ENCODE measurements at regions of chr3 and their contacts with region 1.

Region 1: GRCh38 chr3:13648060-13649001 is 99.4 kb downstream of the FBLN2 start:
- DNase-seq: peak; percentile 47
- ATAC-seq: peak; percentile 84
- H3K4me3 ChIP-seq: no peak overlapping the region
- H3K27ac ChIP-seq: no peak overlapping the region
- H3K4me1 ChIP-seq: no peaks in the 10 kb centered on the region; the same call in 1 of the 2 replicates
- H3K27me3 ChIP-seq: no peaks in the 10 kb centered on the region
- CTCF ChIP-seq: peak; percentile 95

Region 2: GRCh38 chr3:13073326-13074005 is 574.9 kb before region 1 on chr3 and contains the start of gene IQSEC1:
- CTCF ChIA-PET with region 1: no interaction called
- POLR2A ChIA-PET with region 1: no interaction called
- in situ Hi-C with region 1: no loop called
- intact Hi-C with region 1: no loop called
- DNase-seq: no peak
- ATAC-seq: no peak
- H3K4me3 ChIP-seq: no peak within 1 kb of the TSS
- H3K27ac ChIP-seq: no peak within 1 kb of the TSS
- H3K4me1 ChIP-seq: no peaks in the 10 kb centered on the region
- H3K27me3 ChIP-seq: no peaks in the 10 kb centered on the region
- CTCF ChIP-seq: no peak
- total RNA-seq, gene IQSEC1: 28.4 TPM

Region 3: DNA sequence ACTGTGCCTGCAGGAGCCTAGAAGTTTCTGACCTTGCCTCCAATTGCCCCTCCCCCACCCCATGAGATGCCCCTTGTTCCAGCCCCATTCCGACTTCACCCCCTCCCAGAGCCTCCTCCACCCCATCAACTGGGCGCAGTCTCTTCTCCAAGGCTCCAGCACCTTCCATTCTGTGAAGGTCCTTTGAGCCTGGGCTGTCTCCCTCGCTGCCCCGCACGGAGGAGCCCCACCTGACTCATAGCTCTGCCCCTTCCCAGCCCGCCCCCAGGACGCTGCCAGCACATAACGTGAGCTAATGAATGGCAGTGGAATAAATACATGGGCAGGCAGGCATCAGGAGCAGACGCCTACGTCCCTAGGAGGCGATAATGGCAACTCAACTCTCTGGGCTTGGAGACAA is 341.3 kb before region 1 on chr3:
- CTCF ChIA-PET with region 1: no interaction called
- POLR2A ChIA-PET with region 1: interaction called, 12 read pairs
- in situ Hi-C with region 1: no loop called
- intact Hi-C with region 1: no loop called
- DNase-seq: no peak
- ATAC-seq: no peak
- H3K4me3 ChIP-seq: no peak overlapping the region
- H3K27ac ChIP-seq: no peak overlapping the region
- H3K4me1 ChIP-seq: no peaks in the 10 kb centered on the region
- H3K27me3 ChIP-seq: no peaks in the 10 kb centered on the region
- CTCF ChIP-seq: no peak

Region 4: DNA sequence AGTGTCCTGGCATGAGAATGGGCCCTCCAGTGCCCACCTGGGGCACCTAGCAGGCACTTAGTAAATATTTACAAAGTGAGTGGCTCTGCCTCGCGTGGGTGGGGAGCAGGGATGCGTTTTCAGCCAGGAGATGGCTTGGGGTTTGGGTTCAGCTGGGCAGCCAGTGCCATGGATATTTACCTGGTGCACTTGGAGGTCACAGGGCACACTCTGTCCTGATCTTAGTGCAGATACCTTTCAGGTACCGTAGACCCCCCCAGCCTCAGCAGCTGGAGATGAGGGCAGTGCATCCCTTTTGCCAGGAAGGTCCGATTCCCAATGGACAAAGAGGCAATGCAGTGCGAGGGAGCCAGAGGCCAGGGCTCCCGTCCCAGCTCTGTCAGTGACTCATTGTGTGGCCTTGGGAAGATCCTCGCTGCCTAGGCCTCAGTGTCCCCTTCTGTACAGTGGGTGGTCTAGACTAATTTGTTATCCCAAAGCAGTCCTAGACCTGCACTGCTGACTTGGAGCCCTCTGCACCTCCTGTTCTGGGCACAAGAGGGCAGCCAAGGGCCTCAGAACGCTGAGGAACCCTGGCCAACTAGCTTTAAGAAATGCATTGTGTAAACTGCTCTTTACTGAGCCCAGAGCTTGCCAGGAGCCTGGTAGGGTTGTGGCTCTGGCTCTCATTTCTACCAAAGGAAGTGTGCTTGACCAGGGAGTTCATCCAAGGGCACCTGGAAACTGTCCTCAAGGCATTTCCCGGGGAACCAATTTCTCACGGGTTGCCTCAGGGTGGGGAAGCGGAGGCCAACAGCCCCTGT is 152.2 kb before region 1 on chr3:
- CTCF ChIA-PET with region 1: interaction called, 44 read pairs
- POLR2A ChIA-PET with region 1: no interaction called
- in situ Hi-C with region 1: no loop called
- intact Hi-C with region 1: loop called (anchors 1 kb)
- DNase-seq: peak; percentile 48
- ATAC-seq: peak; percentile 87
- H3K4me3 ChIP-seq: no peak overlapping the region
- H3K27ac ChIP-seq: no peak overlapping the region
- H3K4me1 ChIP-seq: peaks cover 2% of the 10 kb centered on the region; the same call in 1 of the 2 replicates
- H3K27me3 ChIP-seq: no peaks in the 10 kb centered on the region
- CTCF ChIP-seq: peak; percentile 88

Region 5: DNA sequence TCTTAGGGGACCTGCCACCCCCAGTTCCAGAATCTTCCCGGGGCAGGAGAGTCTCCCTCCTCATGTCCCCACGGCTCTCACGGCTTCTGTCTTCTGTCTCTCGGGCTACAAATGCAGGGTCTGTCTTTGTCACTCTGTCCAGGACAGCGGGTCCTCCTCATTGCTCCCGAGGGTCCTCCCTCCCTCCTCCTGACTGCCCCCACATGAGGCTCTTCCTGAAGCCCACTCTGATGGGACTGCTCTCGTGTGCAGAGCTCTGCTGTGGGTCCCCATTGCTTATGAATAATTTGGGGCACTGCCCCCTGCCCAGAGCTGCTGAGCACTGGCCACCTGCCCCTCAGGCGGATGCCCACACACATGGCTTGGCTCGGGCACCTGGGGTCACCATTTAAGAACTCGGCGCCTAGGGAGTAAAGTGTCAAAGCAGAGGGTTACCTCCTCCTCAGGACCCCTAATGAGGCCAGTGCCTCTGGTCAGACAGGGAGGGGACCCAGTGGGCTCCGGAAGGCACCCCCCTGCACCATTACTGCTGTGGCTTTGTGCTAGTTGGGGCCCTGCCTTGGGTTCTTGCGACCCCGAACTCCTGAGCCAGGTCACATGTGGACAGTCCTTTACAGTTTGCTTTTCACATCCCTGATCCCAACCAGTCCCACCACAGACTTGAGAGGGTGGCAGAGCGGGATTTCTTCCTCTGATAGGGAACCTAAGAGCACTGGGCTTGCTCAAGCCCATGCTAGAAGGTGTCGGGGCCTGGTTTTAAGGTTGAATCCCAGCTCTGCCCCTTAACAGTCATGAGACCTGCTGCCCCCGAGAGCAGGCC is 146.2 kb before region 1 on chr3:
- CTCF ChIA-PET with region 1: interaction called, 12 read pairs
- POLR2A ChIA-PET with region 1: no interaction called
- in situ Hi-C with region 1: no loop called
- intact Hi-C with region 1: no loop called
- DNase-seq: no peak
- ATAC-seq: no peak
- H3K4me3 ChIP-seq: no peak overlapping the region
- H3K27ac ChIP-seq: no peak overlapping the region
- H3K4me1 ChIP-seq: peaks cover 4% of the 10 kb centered on the region
- H3K27me3 ChIP-seq: no peaks in the 10 kb centered on the region
- CTCF ChIP-seq: no peak